T-cell (primary cell): ENCODE measurements at regions of chr10 and their contacts with region 1.

Region 1: DNA sequence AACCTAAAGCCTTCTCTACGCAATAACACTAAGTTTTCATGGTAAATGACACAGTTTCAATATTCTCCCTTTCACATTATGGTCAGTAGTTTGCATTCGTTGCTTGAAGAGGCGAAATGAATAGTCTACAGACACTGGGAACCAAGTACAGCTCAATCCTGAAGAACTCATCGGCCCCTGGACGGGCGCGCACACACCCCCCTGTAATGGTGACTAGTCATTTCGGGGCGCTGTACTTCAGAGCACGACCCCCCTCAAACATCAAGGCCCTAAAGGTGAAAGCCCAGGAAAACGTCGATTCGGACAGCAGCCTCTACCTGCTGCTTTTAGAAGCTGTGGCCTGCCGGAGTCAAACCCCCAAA is 1.0 kb downstream of the NT5C2 start:
- DNase-seq: peak in 3 of 35 experiments; percentile 2 to 4 (median 3)
- ATAC-seq: no peak
- H3K4me3 ChIP-seq: peak overlapping the region; percentile 91 to 93
- H3K4me3 Mint-ChIP-seq: peak overlapping the region; percentile 97 to 99 (median 99)
- H3K27ac ChIP-seq: peak overlapping the region; percentile 85
- H3K27ac Mint-ChIP-seq: peak overlapping the region; percentile 77 to 98
- H3K4me1 ChIP-seq: peaks cover 17 to 26% of the 10 kb centered on the region in 2 experiments
- H3K4me1 Mint-ChIP-seq: peaks cover 39 to 48% (median 48%) of the 10 kb centered on the region in 3 donors
- H3K27me3 ChIP-seq: no peaks in the 10 kb centered on the region
- H3K27me3 Mint-ChIP-seq: no peaks in the 10 kb centered on the region

Region 2: DNA sequence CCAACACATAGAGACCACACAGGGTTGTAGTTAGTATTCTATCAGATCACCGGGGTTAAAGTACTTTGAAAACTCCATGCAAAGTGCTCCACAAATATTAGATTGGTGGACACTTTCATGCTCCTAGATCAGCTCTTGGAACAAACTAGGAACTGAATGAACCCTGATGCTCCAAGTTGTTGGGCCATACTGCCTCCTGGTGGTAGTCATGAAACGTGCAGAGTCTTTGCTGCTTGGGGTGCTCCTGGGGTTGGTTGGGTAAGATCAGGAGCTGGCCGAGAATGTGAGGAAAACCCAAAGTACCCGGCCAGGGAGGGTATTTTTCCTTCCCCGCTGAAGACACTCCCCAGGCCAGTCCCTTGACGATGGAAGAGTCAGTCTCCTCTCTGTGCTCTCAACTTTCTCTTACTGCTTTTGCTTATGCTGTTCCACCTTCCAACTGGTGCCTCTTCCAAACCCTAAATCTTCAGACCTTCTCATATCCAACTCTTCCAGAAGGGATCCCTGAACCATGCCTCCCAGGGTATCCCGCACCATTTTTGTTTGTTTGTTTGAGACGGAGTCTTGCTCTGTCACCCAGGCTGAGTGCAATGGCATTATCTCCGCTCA is 52.7 kb after region 1 on chr10:
- CTCF ChIA-PET with region 1: interaction called, 3 to 16 read pairs
- POLR2A ChIA-PET with region 1: no interaction called
- DNase-seq: peak; percentile 19 to 80 (median 43)
- ATAC-seq: peak; percentile 60 to 71 (median 67)
- H3K4me3 ChIP-seq: no peak overlapping the region
- H3K4me3 Mint-ChIP-seq: no peak overlapping the region
- H3K27ac ChIP-seq: no peak overlapping the region
- H3K27ac Mint-ChIP-seq: no peak overlapping the region
- H3K4me1 ChIP-seq: peaks cover 0 to 5% of the 10 kb centered on the region in 2 experiments
- H3K4me1 Mint-ChIP-seq: peaks cover 6 to 10% (median 7%) of the 10 kb centered on the region in 3 donors
- H3K27me3 ChIP-seq: peaks cover 0 to 10% of the 10 kb centered on the region in 2 experiments
- H3K27me3 Mint-ChIP-seq: no peaks in the 10 kb centered on the region

Region 3: GRCh38 chr10:103534581-103535508 is 342.8 kb after region 1 on chr10:
- CTCF ChIA-PET with region 1: no interaction called
- POLR2A ChIA-PET with region 1: no interaction called
- DNase-seq: no peak
- ATAC-seq: no peak
- H3K4me3 ChIP-seq: no peak overlapping the region
- H3K4me3 Mint-ChIP-seq: no peak overlapping the region
- H3K27ac ChIP-seq: no peak overlapping the region
- H3K27ac Mint-ChIP-seq: no peak overlapping the region
- H3K4me1 ChIP-seq: no peaks in the 10 kb centered on the region
- H3K4me1 Mint-ChIP-seq: no peaks in the 10 kb centered on the region
- H3K27me3 ChIP-seq: peaks cover 0 to 35% of the 10 kb centered on the region in 2 experiments
- H3K27me3 Mint-ChIP-seq: peaks cover 19% of the 10 kb centered on the region in 2 donors